ENCODE measurements at regions of chr19 and their contacts with region 1.

Region 1: DNA sequence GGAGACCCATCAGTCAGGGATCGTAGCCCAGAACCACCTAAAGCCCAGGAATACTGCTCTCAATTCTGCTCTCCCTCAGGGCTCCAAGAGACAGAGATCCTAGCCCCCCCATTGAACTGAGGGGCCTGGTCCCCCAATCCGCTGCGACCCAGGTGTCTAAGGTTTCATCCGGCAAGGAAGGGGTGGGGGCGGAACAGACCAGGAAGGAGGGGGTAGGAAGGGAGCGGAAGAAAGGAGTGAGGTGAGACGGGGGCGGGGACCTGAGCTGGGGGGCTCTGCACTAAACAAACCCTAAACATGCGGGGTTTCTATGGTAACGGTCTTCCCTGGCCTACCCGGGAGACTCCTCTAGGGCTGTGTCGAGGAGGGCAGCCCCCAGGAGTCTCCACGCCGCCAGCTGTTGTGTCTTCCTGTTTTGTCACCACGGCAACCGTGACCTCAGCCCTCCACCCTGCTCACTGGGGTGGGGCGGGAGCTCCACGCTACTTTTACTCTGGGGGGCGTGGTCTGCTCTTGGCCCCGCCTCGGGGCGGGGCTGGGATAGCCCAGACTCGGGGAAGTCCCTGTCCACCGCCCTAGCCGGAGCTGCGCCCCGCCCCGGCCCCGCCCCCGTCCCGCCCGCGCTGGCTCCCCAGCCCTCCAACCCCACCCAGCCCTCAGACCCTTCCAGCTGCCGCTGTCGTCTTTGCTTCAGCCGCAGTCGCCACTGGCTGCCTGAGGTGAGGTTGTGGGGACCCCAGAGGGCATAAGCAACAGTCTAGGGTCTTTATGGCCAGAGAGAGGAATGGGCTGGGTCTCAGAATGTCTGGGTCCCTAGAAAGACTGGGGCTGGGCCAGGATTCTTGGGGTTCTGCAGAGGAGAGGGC is at the start of gene MYADM:
- DNase-seq: peak; percentile 100
- H3K4me3 Mint-ChIP-seq: peak within 1 kb of the TSS; percentile 99
- H3K27ac Mint-ChIP-seq: peak within 1 kb of the TSS; percentile 98
- H3K4me1 Mint-ChIP-seq: peaks cover 38% of the 10 kb centered on the region
- H3K27me3 Mint-ChIP-seq: peaks cover 3% of the 10 kb centered on the region
- total RNA-seq, gene MYADM: 65.6 and 69.0 TPM in 2 replicates

Region 2: DNA sequence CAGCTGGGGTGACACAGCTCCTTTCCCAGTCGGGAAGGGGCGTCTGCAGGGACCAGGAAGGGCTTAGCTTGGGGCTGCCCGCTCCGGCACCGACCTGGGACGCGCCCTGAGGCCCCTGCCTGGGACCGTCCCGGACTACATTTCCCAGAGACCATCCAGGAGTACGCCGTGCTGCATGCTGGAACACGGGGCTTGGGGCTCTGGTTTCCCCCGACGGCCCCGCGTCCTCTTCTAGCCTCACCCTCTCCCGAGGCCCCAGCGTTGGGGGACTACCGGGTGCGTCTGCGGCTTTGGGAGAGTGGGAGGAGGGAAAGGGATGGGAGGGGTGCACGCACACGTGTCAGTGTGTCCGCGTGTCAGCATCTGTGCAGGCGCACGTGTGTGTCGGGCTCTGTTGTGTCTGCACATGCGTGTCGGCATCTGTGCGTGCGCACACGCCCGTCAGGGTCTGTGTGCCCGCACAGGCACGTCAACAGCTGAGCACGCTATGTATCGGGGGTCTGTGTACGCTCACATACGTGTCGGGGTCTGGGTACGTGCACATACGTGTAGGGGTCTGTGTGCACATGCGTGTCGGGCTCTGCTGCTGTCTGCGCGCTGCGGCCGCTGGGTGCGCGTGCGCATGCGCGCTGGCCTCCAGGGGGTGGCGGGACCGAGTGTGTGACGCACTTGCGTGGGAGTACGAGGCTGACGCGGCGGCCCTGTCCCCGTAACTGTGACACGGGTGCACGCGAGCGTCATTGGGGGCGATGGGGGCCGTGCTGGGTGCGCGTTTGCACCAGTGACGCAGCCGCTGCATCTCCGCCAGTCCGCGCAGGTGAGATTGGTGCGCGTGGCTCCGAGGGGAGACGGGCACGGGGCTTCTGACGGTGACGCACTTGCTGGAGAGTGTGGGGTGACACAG is 329.7 kb before region 1 on chr19 and contains the start of gene ZNF331:
- intact Hi-C with region 1: loop called (anchors 5 kb)
- DNase-seq: peak; percentile 96
- H3K4me3 Mint-ChIP-seq: peak within 1 kb of the TSS; percentile 97
- H3K27ac Mint-ChIP-seq: peak within 1 kb of the TSS; percentile 99
- H3K4me1 Mint-ChIP-seq: peaks cover 13% of the 10 kb centered on the region
- H3K27me3 Mint-ChIP-seq: peaks cover 2% of the 10 kb centered on the region
- total RNA-seq, gene ZNF331: 18.2 and 18.9 TPM in 2 replicates

Region 3: GRCh38 chr19:53824134-53824611 is 43.3 kb before region 1 on chr19 and contains the start of gene NLRP12:
- intact Hi-C with region 1: no loop called
- DNase-seq: no peak
- H3K4me3 Mint-ChIP-seq: no peak within 1 kb of the TSS
- H3K27ac Mint-ChIP-seq: no peak within 1 kb of the TSS
- H3K4me1 Mint-ChIP-seq: peaks cover 3% of the 10 kb centered on the region
- H3K27me3 Mint-ChIP-seq: peaks cover 14% of the 10 kb centered on the region
- total RNA-seq, gene NLRP12: not detected in 2 replicates

Region 4: GRCh38 chr19:53879140-53880081 is 12.0 kb after region 1 on chr19:
- intact Hi-C with region 1: loop called (anchors 1 kb)
- DNase-seq: peak; percentile 97
- H3K4me3 Mint-ChIP-seq: no peak overlapping the region
- H3K27ac Mint-ChIP-seq: no peak overlapping the region
- H3K4me1 Mint-ChIP-seq: peaks cover 37% of the 10 kb centered on the region
- H3K27me3 Mint-ChIP-seq: peaks cover 15% of the 10 kb centered on the region

Region 5: GRCh38 chr19:54159352-54160181 is 292.1 kb after region 1 on chr19 and contains the start of gene LENG1:
- intact Hi-C with region 1: loop called (anchors 5 kb)
- DNase-seq: peak; percentile 99
- H3K4me3 Mint-ChIP-seq: peak within 1 kb of the TSS; percentile 91
- H3K27ac Mint-ChIP-seq: peak within 1 kb of the TSS; percentile 99
- H3K4me1 Mint-ChIP-seq: peaks cover 49% of the 10 kb centered on the region
- H3K27me3 Mint-ChIP-seq: no peaks in the 10 kb centered on the region
- total RNA-seq, gene LENG1: 4.6 and 5.7 TPM in 2 replicates

Region 6: GRCh38 chr19:54463531-54464043 is 596.1 kb after region 1 on chr19 and contains the start of gene LENG9:
- intact Hi-C with region 1: loop called (anchors 5 kb)
- DNase-seq: peak; percentile 99
- H3K4me3 Mint-ChIP-seq: peak within 1 kb of the TSS; percentile 87
- H3K27ac Mint-ChIP-seq: peak within 1 kb of the TSS; percentile 90
- H3K4me1 Mint-ChIP-seq: peaks cover 26% of the 10 kb centered on the region
- H3K27me3 Mint-ChIP-seq: peaks cover 16% of the 10 kb centered on the region
- total RNA-seq, gene LENG9: 8.2 and 8.3 TPM in 2 replicates